Common myeloid progenitor, CD34-positive (primary cell): ENCODE measurements at regions of chr9 and their contacts with region 1.

Region 1: DNA sequence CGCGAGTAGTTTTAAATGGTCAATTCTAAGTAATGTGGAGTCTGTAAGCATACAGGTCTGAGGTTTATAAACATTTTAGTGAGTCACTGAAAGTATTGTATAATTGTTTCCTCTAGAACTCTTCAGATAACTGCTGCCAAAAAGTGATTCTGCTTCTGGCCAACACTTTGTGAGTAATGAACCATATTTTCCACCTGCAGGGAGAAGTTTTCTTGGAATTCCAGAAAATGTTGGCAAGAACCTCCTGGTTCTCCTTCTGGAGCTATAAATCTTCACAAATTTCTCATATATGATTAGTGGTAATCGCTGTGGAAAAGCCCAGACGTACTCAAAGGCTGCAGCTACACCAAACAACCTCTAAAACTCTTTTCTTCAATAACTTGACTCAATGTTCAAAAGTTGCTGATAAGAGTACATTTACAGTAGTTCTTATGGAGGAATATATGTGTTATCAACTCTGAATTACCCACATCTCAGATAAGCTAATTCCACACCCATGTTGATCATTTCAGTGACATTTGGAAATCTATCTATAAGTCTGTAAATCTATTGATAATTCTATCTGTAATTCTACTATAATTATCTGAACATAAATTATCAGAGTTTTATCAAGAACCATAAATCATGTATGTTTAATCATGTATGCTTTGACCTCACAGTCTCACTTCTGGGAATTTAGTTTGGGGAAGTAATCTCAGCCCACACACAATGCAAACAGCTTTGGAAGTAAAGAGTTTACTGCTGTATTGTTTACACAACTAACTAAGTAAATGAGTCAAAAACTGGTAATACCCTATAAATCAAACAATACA is 74.1 kb downstream of the FNBP1 start:
- DNase-seq: peak in 2 of 3 donors; percentile 34 to 42
- H3K4me3 ChIP-seq: no peak overlapping the region
- H3K27ac ChIP-seq: peak overlapping the region in 1 of 2 experiments; percentile 38
- H3K4me1 ChIP-seq: peaks cover 0 to 34% (median 10%) of the 10 kb centered on the region in 4 experiments
- H3K27me3 ChIP-seq: no peaks in the 10 kb centered on the region

Region 2: GRCh38 chr9:129954868-129955550 is 13.9 kb before region 1 on chr9:
- CTCF ChIA-PET with region 1: interaction called, 18 read pairs
- POLR2A ChIA-PET with region 1: interaction called, 5 read pairs
- DNase-seq: peak; percentile 90 to 96 (median 95)
- H3K4me3 ChIP-seq: peak overlapping the region in 4 of 7 experiments; percentile 13 to 58 (median 34)
- H3K27ac ChIP-seq: peak overlapping the region; percentile 58 to 73
- H3K4me1 ChIP-seq: peaks cover 9 to 22% (median 14%) of the 10 kb centered on the region in 4 experiments
- H3K27me3 ChIP-seq: no peaks in the 10 kb centered on the region

Region 3: GRCh38 chr9:130088051-130088450 is 119.2 kb after region 1 on chr9:
- CTCF ChIA-PET with region 1: no interaction called
- POLR2A ChIA-PET with region 1: no interaction called
- DNase-seq: no peak
- H3K4me3 ChIP-seq: no peak overlapping the region
- H3K27ac ChIP-seq: peak overlapping the region in 1 of 2 experiments; percentile 9
- H3K4me1 ChIP-seq: peaks cover 0 to 1% (median 0%) of the 10 kb centered on the region in 4 experiments
- H3K27me3 ChIP-seq: no peaks in the 10 kb centered on the region

Region 4: GRCh38 chr9:130235897-130236668 is 267.2 kb after region 1 on chr9:
- CTCF ChIA-PET with region 1: no interaction called
- POLR2A ChIA-PET with region 1: no interaction called
- DNase-seq: peak; percentile 47 to 72 (median 65)
- H3K4me3 ChIP-seq: peak overlapping the region in 3 of 7 experiments; percentile 12 to 62 (median 35)
- H3K27ac ChIP-seq: no peak overlapping the region
- H3K4me1 ChIP-seq: peaks cover 0 to 11% (median 3%) of the 10 kb centered on the region in 4 experiments
- H3K27me3 ChIP-seq: no peaks in the 10 kb centered on the region